ENCODE measurements at regions of chr11 and their contacts with region 1.

Region 1: DNA sequence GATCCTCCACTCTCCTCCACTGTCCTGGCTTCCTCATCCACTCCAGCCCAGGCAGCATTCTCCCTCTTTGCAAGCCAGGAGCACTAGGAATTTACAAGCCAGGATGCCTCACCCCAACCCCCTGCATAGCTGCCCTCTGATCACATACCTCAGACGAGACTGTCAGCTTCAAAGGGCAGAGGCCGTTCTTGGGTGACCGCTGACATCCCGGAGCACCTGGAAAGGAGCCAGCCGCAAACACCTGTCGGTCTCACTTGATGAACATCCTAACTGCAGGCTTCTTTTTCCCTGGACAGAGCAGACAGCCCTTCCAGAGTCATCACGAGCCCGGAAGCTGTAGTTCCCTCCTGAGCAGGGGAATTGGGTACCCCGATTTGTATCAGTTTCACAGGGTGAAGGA is 451.3 kb upstream of the B3GAT1 start:
- DNase-seq: no peak
- ATAC-seq: peak in 1 of 8 donors; percentile 17
- H3K4me3 ChIP-seq: no peak overlapping the region
- H3K27ac ChIP-seq: no peak overlapping the region
- H3K4me1 ChIP-seq: peaks cover 0 to 3% (median 0%) of the 10 kb centered on the region in 9 donors
- H3K27me3 ChIP-seq: peaks cover 0 to 29% (median 10%) of the 10 kb centered on the region in 7 donors
- CTCF ChIP-seq: no peak

Region 2: GRCh38 chr11:134223836-134224709 is 639.2 kb before region 1 on chr11 and contains the starts of genes NCAPD3 and VPS26B:
- intact Hi-C with region 1: no loop called
- DNase-seq: peak; percentile 96 to 97
- ATAC-seq: peak; percentile 93 to 98 (median 95)
- H3K4me3 ChIP-seq: peak within 1 kb of the TSS; percentile 68 to 90 (median 76)
- H3K27ac ChIP-seq: peak within 1 kb of the TSS; percentile 81 to 97 (median 94)
- H3K4me1 ChIP-seq: peaks cover 6 to 49% (median 42%) of the 10 kb centered on the region in 9 donors
- H3K27me3 ChIP-seq: no peaks in the 10 kb centered on the region
- CTCF ChIP-seq: peak in 1 of 9 donors; percentile 9
- total RNA-seq, gene NCAPD3: 7.2 to 16.7 (median 11.4) TPM
- total RNA-seq, gene VPS26B: 30.7 to 49.6 (median 35.3) TPM

Region 3: DNA sequence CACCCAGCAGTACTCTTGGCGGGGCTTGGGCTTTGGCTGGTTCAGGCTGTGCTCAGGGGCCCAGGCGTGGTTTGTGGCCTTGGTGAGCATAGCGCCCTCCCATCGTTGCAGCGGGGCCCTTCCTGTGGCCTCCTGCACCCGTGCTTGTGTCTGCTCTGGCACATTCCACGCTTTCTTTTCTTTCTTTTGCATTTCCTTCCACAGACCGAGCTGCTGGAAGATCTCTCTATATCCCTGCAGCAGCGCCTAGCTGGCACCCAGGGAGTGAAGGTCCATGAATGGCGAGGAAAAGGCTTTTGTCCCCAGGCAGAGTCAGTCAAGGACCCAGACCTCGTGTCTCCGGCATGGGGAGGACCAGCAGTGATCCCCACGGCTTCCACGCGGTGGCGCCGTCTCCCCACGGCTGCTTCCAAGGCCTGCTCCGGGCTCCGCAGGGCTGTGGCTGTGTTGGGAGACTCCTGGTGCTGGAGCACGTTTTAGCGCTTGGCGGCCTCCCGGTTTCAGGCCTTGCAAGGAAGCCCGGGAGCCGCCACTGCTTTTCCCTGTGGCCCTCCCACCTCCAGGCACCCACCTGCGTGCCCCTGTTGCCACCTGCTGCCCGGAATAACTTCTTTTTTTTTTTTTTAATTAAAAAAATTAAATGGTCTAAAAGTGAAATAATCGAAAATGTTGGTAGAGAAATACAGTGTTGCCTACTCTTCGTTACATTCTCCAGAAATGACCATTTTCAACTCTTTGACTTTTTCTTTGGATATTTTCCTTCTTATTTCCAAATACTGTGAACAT is 503.1 kb before region 1 on chr11:
- intact Hi-C with region 1: loop called in 1 of 10 experiments (anchors 2 kb)
- DNase-seq: peak; percentile 63 to 78
- ATAC-seq: peak; percentile 78 to 91 (median 88)
- H3K4me3 ChIP-seq: no peak overlapping the region
- H3K27ac ChIP-seq: no peak overlapping the region
- H3K4me1 ChIP-seq: peaks cover 0 to 4% (median 0%) of the 10 kb centered on the region in 9 donors
- H3K27me3 ChIP-seq: peaks cover 0 to 58% (median 47%) of the 10 kb centered on the region in 7 donors
- CTCF ChIP-seq: peak; percentile 53 to 83 (median 80)

Region 4: GRCh38 chr11:135033540-135033939 is 170.2 kb after region 1 on chr11:
- intact Hi-C with region 1: loop called in 1 of 10 experiments (anchors 1 kb)
- DNase-seq: peak in 1 of 2 donors; percentile 10
- ATAC-seq: peak in 3 of 8 donors; percentile 34 to 65 (median 44)
- H3K4me3 ChIP-seq: no peak overlapping the region
- H3K27ac ChIP-seq: no peak overlapping the region
- H3K4me1 ChIP-seq: no peaks in the 10 kb centered on the region
- H3K27me3 ChIP-seq: peaks cover 0 to 25% (median 8%) of the 10 kb centered on the region in 7 donors
- CTCF ChIP-seq: peak in 6 of 9 donors; percentile 27 to 52 (median 41)

Measured in heart right ventricle (tissue), 16 donors.